PC-3 (cell line): ENCODE measurements at regions of chr1 and their contacts with region 1.

Region 1: DNA sequence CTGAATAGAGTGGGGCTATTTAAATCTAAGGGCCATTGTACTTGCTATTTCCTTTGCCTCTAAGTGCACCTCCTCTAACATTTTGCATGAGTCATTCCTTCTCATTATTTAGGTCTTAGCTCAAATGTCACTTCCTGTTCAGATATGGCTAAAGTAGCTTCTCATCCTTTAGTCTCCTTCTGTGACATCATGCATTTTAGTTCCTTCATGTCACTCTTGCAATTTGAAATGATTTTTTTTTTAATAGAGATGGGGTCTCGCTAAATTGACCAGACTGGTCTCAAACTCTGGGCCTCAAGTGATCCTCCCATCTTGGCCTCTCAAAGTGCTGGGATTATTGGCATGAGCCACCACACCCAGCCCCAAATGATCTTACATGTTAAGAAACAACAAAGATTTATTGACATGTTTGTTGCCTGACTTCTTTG is 6.6 kb downstream of the TBX19 start:
- DNase-seq: peak; percentile 78
- ATAC-seq: peak; percentile 19; the same call in 1 of the 2 replicates
- H3K4me3 ChIP-seq: no peak overlapping the region
- H3K27ac ChIP-seq: peak overlapping the region; percentile 71
- H3K4me1 ChIP-seq: peaks cover 50% of the 10 kb centered on the region
- H3K27me3 ChIP-seq: no peaks in the 10 kb centered on the region
- CTCF ChIP-seq: no peak

Region 2: GRCh38 chr1:168170564-168171508 is 116.4 kb before region 1 on chr1:
- CTCF ChIA-PET with region 1: no interaction called
- POLR2A ChIA-PET with region 1: no interaction called
- intact Hi-C with region 1: no loop called
- DNase-seq: no peak
- ATAC-seq: no peak
- H3K4me3 ChIP-seq: no peak overlapping the region
- H3K27ac ChIP-seq: no peak overlapping the region
- H3K4me1 ChIP-seq: no peaks in the 10 kb centered on the region
- H3K27me3 ChIP-seq: no peaks in the 10 kb centered on the region
- CTCF ChIP-seq: no peak

Region 3: DNA sequence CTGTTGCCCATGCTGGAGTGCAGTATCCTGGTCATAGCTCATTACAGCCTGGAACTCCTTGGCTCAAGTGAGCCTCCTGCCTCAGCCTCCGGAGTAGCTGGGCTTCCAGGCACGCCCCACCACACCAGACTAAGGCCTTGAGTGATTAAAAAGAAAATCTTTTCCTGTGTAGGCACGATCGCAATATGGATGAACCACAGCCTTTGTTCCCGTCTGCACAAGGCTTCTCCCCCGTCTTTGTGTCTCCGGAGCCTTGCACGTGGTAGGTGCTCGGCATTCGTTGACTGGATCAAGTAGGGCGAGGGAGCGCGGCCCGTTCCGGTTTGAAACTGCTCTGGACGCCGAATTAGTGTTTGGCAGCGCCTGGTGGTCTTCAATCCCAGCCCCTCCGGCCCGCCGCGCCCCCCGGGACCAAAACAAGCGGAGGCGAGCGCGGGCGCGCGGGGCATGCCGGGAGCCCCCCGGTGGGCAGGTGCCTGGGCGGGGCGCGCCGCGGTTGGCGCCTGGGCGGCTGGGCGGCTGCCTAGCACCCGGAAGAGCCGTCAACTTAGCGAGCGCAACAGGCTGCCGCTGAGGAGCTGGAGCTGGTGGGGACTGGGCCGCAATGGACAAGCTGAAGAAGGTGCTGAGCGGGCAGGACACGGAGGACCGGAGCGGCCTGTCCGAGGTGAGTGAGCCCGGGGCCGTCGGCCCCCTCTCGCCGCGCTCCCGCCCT is 61.6 kb before region 1 on chr1 and contains the start of gene SFT2D2:
- CTCF ChIA-PET with region 1: no interaction called
- POLR2A ChIA-PET with region 1: interaction called, 7 read pairs
- intact Hi-C with region 1: loop called (anchors 5 kb)
- DNase-seq: peak; percentile 85
- ATAC-seq: peak; percentile 91
- H3K4me3 ChIP-seq: peak within 1 kb of the TSS; percentile 89
- H3K27ac ChIP-seq: peak within 1 kb of the TSS; percentile 51
- H3K4me1 ChIP-seq: peaks cover 55% of the 10 kb centered on the region
- H3K27me3 ChIP-seq: no peaks in the 10 kb centered on the region
- CTCF ChIP-seq: no peak
- total RNA-seq, gene SFT2D2: 36.8 and 38.7 TPM in 2 replicates

Region 4: DNA sequence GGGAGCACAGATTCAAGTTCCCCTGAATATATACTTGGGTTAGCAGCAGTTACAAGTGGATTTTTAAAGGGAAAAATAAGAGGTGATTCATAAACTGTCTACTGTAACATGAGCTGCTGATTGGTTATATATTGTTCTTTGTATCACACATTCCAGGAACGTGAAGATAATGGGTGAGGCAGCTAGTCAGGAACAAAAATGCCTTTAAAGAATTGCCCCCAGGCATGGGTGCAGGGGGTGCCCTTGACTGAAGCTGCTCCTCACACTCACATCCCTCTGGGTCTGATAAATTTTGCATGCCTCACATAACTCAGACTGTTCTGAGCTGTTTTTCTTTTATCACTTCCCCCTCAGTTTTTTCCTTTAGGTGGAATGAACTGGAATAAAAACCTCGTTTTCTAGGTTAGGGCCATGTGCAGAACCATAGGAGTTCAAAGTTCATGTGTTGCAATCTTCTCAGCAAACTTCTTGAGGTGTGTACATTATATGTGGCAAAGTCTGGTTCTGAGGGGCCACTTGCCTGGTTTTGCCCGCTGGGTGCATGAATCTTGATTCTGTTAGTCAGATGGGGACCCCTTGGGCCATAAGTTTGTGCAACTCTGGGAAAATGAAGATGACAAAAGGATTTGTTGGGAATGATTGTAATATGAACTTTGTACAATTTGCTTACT is 14.5 kb after region 1 on chr1:
- CTCF ChIA-PET with region 1: no interaction called
- POLR2A ChIA-PET with region 1: no interaction called
- intact Hi-C with region 1: loop called (anchors 1 kb)
- DNase-seq: peak; percentile 99
- ATAC-seq: peak; percentile 93
- H3K4me3 ChIP-seq: 0 out of 2 replicates have a peak overlapping the region, but pooled peaks have one; percentile 8
- H3K27ac ChIP-seq: peak overlapping the region; percentile 76
- H3K4me1 ChIP-seq: peaks cover 38% of the 10 kb centered on the region
- H3K27me3 ChIP-seq: no peaks in the 10 kb centered on the region
- CTCF ChIP-seq: no peak

Region 5: GRCh38 chr1:168321945-168322344 is 34.7 kb after region 1 on chr1:
- CTCF ChIA-PET with region 1: interaction called, 5 read pairs
- POLR2A ChIA-PET with region 1: no interaction called
- intact Hi-C with region 1: loop called (anchors 1 kb)
- DNase-seq: peak; percentile 75
- ATAC-seq: peak; percentile 79
- H3K4me3 ChIP-seq: no peak overlapping the region
- H3K27ac ChIP-seq: no peak overlapping the region
- H3K4me1 ChIP-seq: peaks cover 17% of the 10 kb centered on the region
- H3K27me3 ChIP-seq: no peaks in the 10 kb centered on the region
- CTCF ChIP-seq: peak; percentile 84